Naive thymus-derived CD4-positive, alpha-beta T cell (primary cell): ENCODE measurements at regions of chr3 and their contacts with region 1.

Region 1: DNA sequence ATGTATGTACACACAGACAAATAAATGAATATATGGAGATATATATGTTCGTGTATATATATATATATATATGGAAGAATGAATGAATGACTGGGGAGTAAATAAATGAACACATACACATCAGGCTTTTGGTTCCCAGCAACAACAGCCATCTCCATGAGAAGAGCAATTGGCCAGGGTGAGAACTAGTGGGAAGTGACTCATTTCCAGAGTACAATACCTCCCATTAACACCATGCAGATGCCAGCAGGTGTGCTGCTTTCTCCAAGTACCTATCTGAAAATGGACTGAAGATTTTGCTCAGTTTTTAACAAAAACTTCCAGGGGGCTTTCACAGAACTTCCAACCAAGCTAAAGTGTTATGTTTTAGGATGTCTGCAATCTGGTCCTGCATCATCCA is 179.8 kb upstream of the SLC2A2 start:
- DNase-seq: no peak
- ATAC-seq: no peak
- H3K4me3 ChIP-seq: no peak overlapping the region
- H3K4me3 Mint-ChIP-seq: no peak overlapping the region
- H3K27ac ChIP-seq: no peak overlapping the region
- H3K27ac Mint-ChIP-seq: peak overlapping the region in 1 of 9 donors; percentile 40
- H3K4me1 ChIP-seq: no peaks in the 10 kb centered on the region
- H3K4me1 Mint-ChIP-seq: peaks cover 8 to 28% (median 11%) of the 10 kb centered on the region in 7 donors
- H3K27me3 ChIP-seq: no peaks in the 10 kb centered on the region
- H3K27me3 Mint-ChIP-seq: no peaks in the 10 kb centered on the region

Region 2: GRCh38 chr3:170848292-170848917 is 357.9 kb before region 1 on chr3:
- CTCF ChIA-PET with region 1: no interaction called
- POLR2A ChIA-PET with region 1: no interaction called
- intact Hi-C with region 1: no loop called
- DNase-seq: no peak
- ATAC-seq: no peak
- H3K4me3 ChIP-seq: no peak overlapping the region
- H3K4me3 Mint-ChIP-seq: no peak overlapping the region
- H3K27ac ChIP-seq: no peak overlapping the region
- H3K27ac Mint-ChIP-seq: no peak overlapping the region
- H3K4me1 ChIP-seq: no peaks in the 10 kb centered on the region
- H3K4me1 Mint-ChIP-seq: no peaks in the 10 kb centered on the region
- H3K27me3 ChIP-seq: no peaks in the 10 kb centered on the region
- H3K27me3 Mint-ChIP-seq: peaks cover 9 to 43% (median 23%) of the 10 kb centered on the region in 5 donors

Region 3: DNA sequence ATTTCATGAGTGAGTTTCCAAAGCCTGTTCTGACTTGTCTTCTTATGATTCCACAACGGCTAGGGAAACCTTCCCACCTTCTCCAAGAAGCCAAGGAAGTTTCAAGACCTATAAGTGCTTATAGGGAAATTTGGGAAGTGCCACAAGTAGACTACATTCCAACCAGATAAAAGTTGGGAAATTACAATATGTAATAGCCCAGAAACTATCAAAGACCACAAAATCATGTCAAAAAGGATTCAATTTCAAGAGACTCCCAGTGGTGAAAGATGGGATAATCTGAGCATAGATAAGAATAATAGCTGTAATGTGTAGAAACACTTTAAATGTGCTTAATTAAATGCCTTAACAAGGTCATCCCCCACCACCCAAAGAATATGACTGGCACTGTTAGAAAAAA is 10.6 kb before region 1 on chr3:
- CTCF ChIA-PET with region 1: interaction called, 5 read pairs
- POLR2A ChIA-PET with region 1: interaction called, 4 read pairs
- intact Hi-C with region 1: loop called in 1 of 2 experiments (anchors 1 kb)
- DNase-seq: no peak
- ATAC-seq: no peak
- H3K4me3 ChIP-seq: no peak overlapping the region
- H3K4me3 Mint-ChIP-seq: no peak overlapping the region
- H3K27ac ChIP-seq: no peak overlapping the region
- H3K27ac Mint-ChIP-seq: no peak overlapping the region
- H3K4me1 ChIP-seq: no peaks in the 10 kb centered on the region
- H3K4me1 Mint-ChIP-seq: peaks cover 0 to 23% (median 11%) of the 10 kb centered on the region in 7 donors
- H3K27me3 ChIP-seq: no peaks in the 10 kb centered on the region
- H3K27me3 Mint-ChIP-seq: no peaks in the 10 kb centered on the region